Dendritic cell treated with granulocyte-macrophage colony-stimulating factor and Interleukin-4, amounts not matched to agents 40 ng/mL and 50 ng/mL, for 4 days (primary cell): ENCODE measurements at regions of chr2 and their contacts with region 1.

Region 1: DNA sequence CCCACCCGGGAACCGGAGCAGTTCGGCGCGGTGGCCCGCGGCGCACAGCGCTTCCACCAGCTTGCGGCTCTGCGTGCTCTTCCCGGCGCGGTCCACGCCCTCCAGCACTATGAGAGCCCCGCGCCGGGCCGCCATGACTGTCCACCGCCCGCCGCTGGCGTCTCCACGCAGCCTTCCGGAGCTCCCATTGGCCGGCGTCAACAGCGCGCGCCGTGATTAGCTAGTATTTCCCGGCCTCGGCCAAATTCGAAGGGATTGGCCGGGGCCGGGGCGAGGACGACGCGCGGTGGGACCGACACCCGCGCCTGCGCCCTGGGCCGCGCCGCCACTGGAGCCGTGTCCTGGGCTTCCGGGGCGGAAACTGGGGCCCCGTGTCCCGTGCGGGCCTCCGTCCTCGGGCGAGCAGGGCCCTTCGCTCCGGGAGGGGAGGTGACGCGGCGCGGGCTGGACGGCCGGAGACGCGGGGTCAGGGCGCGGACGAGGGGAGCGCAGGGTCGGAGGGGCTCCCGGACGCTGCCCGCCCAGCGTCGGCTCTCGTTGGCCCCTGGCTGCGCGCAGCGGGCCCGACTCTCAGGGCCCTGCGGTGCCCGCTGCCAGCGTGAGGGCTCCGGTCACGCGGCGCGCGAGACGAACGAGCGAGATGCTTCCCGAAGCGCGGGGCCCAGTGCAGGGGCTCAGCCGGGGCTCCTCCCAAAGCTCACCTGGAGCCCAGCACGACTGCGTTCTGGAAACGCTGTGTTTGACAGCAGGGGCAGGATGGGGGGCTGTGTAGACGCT is at the start of gene DTYMK:
- H3K4me3 Mint-ChIP-seq: peak within 1 kb of the TSS; percentile 91
- H3K27ac Mint-ChIP-seq: peak within 1 kb of the TSS; percentile 93
- H3K4me1 Mint-ChIP-seq: peaks cover 14% of the 10 kb centered on the region
- H3K27me3 Mint-ChIP-seq: no peaks in the 10 kb centered on the region

Region 2: GRCh38 chr2:241508240-241509154 is 178.3 kb before region 1 on chr2 and contains the start of gene STK25:
- intact Hi-C with region 1: loop called (anchors 5 kb)
- H3K4me3 Mint-ChIP-seq: peak within 1 kb of the TSS; percentile 89
- H3K27ac Mint-ChIP-seq: peak within 1 kb of the TSS; percentile 69
- H3K4me1 Mint-ChIP-seq: peaks cover 25% of the 10 kb centered on the region
- H3K27me3 Mint-ChIP-seq: peaks cover 43% of the 10 kb centered on the region

Region 3: DNA sequence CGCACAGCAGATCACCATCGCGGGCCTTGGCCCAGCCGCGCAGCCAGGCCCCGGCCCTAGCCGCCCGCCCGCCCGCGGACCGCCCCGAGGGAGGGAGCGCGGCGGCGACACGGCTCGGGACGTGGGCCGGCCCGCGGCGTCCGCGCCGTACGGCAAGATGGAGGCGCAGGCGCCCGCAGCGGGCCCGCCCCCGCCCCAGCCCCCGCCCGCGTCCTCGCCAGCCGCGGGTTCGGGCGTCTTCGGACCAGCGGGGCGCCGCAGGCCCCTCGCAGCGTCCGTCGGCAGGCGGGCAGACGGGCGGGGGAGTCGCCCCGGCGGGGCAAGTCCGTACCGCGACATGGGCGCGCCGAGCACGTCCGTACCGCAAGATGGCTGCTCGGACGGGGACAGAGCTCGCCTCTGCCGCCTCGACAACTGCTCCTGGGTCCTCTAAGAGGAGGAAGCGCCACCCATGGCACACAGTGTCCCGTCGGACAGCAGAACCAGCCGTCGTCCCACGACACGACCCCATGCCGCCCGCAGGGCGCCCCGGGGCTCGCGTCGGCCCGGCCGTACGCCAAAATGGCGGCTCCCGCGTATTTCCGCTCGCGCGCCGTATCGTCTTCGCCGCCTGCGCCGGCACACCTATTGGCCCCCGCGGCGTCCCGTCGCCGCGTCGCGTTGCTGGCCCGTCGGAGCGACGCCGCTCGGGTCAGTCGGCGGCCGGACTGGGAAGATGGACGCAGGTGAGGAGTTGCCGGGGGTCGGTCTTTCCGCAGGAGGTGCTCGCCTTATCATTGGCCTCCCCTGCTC is 49.6 kb before region 1 on chr2 and contains the starts of genes ATG4B and THAP4:
- intact Hi-C with region 1: loop called (anchors 2 kb)
- H3K4me3 Mint-ChIP-seq: peak within 1 kb of the TSS; percentile 84
- H3K27ac Mint-ChIP-seq: peak within 1 kb of the TSS; percentile 85
- H3K4me1 Mint-ChIP-seq: peaks cover 63% of the 10 kb centered on the region
- H3K27me3 Mint-ChIP-seq: no peaks in the 10 kb centered on the region

Region 4: DNA sequence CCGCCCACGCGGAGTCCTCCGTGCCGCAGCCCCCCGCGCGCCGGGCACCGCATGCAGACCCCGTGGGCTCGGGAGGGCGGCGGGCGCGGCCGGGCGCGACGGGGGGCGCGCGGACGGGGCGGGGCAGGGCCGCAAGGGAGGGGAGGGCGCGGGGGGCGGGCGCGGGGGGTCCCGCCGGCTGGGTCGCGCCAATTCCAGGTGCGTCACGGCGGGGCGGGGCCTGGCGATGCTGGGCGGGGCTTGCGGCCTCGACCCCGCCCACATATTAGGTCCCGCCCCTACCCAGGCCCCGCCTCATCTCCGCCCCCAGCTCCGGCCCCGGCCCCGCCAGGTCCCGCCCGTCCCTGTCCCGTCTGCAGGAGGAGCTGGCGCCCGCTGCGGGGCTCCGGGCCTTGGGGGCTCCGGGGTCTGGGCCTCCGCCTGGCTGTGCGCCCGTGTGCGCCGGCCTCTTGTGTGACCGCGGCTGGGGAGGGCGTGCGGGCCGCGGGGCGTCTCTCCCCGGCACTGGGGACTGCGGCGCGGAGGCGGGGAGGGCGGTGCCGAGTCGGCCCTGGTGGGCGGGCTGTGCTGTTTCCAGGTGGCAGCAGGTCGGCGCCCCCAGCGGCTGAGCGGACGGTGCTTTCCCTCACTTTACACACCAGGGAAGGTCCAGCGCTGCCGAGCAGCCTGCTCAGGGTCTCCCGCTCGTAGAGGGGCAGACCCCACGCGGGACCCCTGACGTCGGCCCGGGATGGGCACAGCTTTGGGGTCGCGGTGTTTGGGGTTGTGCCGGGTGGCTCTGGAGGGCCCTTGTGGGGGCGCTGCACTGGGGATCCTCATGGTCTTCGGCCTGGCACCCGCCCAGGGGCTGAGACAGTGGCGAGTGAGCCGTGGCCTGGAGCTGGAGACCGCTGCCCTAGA is 15.5 kb after region 1 on chr2:
- intact Hi-C with region 1: loop called (anchors 1 kb)
- H3K4me3 Mint-ChIP-seq: peak overlapping the region; percentile 78
- H3K27ac Mint-ChIP-seq: peak overlapping the region; percentile 81
- H3K4me1 Mint-ChIP-seq: peaks cover 18% of the 10 kb centered on the region
- H3K27me3 Mint-ChIP-seq: no peaks in the 10 kb centered on the region

Region 5: DNA sequence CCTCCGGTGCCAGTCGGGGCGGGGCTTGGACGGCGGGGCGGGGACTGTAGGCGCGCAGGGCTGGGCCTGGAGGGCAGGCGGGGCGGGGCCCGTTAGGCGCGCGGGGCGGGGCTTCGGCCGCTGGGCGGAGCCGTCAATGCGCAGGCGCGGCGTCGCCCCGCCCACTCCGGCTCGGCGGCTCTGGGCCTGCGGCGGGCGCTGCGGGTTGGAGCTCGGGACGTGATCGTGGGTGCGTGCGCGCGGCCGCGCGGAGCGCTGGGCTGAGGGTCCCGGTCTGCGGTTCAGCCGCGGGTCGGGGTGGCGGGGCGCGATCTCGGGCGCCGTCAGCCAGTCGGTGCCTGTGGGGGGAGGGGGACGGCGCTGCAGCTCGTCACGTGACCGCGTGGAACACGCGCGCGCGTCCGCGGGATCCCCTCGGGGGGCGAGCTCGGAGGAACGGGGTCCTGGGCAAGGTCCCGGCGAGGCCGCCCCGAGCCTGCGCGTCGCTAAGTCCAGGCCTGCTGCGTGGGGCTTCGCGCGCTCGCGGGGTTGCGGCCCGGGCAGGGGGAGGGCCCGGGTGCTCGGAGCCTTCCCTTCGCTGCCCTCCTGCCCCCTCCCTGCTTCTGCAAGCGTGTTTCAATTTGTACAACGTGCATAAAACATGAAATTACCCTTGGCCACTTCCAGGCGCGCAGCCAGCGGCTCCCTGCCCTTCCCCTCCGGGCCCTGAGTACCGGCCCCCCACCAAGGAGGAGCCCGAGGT is 47.8 kb after region 1 on chr2 and contains the start of gene D2HGDH:
- intact Hi-C with region 1: loop called (anchors 5 kb)
- H3K4me3 Mint-ChIP-seq: peak within 1 kb of the TSS; percentile 82
- H3K27ac Mint-ChIP-seq: peak within 1 kb of the TSS; percentile 70
- H3K4me1 Mint-ChIP-seq: peaks cover 54% of the 10 kb centered on the region
- H3K27me3 Mint-ChIP-seq: peaks cover 6% of the 10 kb centered on the region